Psoas muscle (tissue), 8 donors: ENCODE measurements at regions of chr4 and their contacts with region 1.

Region 1: DNA sequence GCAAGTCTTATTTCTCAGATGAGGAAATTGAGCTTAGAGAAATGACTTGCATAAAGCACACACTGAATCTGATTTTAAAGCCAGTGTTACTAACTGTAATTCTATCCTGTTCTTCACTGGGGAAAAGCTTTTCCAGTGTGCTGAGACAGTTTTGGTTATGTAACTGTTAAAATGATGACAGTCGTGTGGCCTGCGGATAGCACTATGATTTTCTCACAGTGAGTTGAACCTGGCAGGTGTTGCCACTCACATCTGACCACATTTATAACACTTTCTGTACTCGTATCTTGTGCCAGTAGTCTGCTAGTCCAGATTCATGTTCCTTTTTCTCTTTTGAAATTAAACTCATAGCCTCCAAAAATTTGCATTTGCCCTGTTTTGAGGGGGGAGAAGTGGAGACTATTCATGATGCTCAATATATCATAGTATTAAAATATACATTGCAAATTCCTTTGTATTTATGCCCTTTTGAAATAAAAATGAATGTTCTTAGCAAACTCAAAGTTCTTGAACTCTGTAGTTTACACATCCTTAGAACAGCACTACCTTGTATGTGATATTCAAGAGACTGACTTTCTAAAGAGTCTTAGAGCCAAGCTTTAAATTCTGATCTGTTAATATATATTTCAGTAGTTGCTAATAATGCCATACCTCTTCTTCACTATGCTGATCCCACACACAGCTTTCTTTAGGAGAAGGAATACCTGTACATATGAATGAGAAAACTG is 132.3 kb downstream of the PDLIM5 start:
- DNase-seq: no peak
- ATAC-seq: peak; percentile 73 to 84 (median 76)
- H3K4me3 ChIP-seq: no peak overlapping the region
- H3K27ac ChIP-seq: peak overlapping the region; percentile 68
- H3K4me1 ChIP-seq: peaks cover 47% of the 10 kb centered on the region
- H3K27me3 ChIP-seq: no peaks in the 10 kb centered on the region
- CTCF ChIP-seq: no peak

Region 2: DNA sequence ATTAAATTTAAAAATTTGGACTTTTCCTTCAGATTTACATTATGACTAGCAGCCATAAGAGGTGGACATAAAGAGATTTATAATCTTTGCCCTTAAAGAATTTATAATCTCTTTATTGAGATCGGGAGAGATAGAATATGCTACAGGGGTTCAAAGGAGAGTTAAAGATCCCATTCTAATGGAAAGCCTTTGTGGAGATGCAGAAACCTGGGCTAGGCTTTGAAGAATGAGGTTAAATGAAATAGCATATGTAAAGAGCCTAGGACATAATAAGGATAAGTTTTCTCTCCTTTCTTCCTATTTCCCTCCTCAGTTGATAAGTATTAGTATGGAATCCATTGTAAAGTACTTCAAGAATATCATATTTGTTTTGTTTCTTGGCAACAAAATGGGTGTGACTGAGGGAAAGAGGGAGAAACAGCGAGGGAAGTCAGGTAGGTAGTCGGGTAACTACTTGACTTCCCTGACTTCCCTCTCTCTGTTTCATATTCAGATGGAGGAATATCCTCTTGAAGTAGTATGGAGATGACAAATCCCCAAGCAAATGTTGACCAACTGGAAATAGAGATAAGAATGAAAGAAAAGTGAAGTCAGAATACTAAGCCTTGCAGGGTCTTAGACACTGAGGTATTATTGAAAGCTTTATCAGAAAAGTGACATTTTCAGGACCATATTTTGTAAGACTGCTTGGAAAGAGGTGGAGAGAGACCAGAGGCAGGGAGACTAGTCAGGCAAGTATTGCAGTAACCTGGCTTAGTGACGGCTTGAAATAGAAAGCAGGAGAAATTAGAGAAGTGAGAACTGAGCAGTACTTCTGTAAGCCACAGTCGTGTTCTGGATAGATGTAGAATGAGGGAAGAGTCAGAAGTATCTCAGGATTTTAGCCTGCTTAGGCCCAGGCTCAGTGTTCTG is 49.4 kb before region 1 on chr4:
- intact Hi-C with region 1: loop called in 1 of 2 experiments (anchors 5 kb)
- DNase-seq: no peak
- ATAC-seq: peak; percentile 69 to 78 (median 73)
- H3K4me3 ChIP-seq: peak overlapping the region; percentile 12
- H3K27ac ChIP-seq: peak overlapping the region; percentile 84
- H3K4me1 ChIP-seq: peaks cover 94% of the 10 kb centered on the region
- H3K27me3 ChIP-seq: no peaks in the 10 kb centered on the region
- CTCF ChIP-seq: no peak

Region 3: GRCh38 chr4:94641702-94642560 is 57.9 kb after region 1 on chr4:
- intact Hi-C with region 1: no loop called
- DNase-seq: no peak
- ATAC-seq: peak in 1 of 4 donors; percentile 23
- H3K4me3 ChIP-seq: no peak overlapping the region
- H3K27ac ChIP-seq: peak overlapping the region; percentile 62
- H3K4me1 ChIP-seq: peaks cover 12% of the 10 kb centered on the region
- H3K27me3 ChIP-seq: no peaks in the 10 kb centered on the region
- CTCF ChIP-seq: no peak

Region 4: GRCh38 chr4:95728145-95728544 is 1144.1 kb after region 1 on chr4:
- intact Hi-C with region 1: no loop called
- DNase-seq: no peak
- ATAC-seq: peak in 3 of 4 donors; percentile 40 to 63 (median 53)
- H3K4me3 ChIP-seq: no peak overlapping the region
- H3K27ac ChIP-seq: no peak overlapping the region
- H3K4me1 ChIP-seq: no peaks in the 10 kb centered on the region
- H3K27me3 ChIP-seq: no peaks in the 10 kb centered on the region
- CTCF ChIP-seq: no peak